Left ventricle myocardium inferior (tissue), 1 donor: ENCODE measurements at regions of chr9 and their contacts with region 1.

Region 1: DNA sequence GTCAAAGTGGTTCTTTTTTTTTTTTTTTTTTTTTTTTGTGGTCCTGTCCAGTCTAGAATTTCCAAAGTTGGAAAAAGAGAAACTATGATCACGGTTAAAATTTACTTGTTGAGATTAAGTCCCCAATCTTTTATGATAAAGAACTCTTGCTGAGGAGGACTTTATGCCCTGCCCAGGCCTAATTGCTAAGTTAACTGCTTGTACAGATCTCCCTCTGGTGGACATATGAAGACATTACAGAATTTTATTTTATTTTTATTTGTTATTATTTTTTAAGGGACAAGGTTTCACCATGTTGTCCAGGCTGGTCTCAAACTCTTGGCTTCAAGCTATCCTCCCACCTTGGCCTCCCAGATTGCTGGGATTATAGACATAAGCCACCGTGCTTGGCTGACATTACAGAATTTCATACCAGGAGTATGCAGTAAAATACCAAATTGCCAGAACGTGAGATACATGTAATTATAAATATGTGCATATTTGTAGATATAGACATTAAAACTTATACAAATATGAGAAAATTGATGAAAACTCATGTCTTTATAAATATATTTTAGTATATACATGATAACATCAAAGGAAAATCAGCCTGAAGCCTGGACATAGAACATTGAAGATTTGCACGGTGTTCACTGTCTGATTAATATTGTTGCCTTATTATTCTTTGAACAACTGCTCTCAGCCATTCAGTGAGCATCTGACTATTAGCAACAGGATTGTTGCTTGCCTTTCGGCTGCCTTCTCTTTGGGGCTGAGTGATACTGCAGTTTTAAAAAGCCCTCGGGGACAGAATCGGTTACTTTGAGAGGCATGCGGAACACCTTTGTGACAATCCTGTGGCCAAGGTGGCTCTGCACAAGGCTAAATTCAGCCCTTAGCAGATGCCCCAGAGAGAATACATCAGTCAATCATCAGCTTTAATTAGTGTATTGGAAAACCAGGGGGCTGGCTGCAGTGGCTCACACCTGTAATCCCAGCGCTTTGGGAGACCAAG is 91.0 kb downstream of the RFK start:
- DNase-seq: no peak
- H3K4me3 ChIP-seq: no peak overlapping the region
- H3K27ac ChIP-seq: no peak overlapping the region
- H3K4me1 ChIP-seq: no peaks in the 10 kb centered on the region
- H3K27me3 ChIP-seq: peaks cover 21% of the 10 kb centered on the region
- CTCF ChIP-seq: peak; percentile 78

Region 2: GRCh38 chr9:75197561-75197960 is 1105.7 kb before region 1 on chr9:
- intact Hi-C with region 1: loop called (anchors 10 kb)
- DNase-seq: no peak
- H3K4me3 ChIP-seq: no peak overlapping the region
- H3K27ac ChIP-seq: no peak overlapping the region
- H3K4me1 ChIP-seq: no peaks in the 10 kb centered on the region
- H3K27me3 ChIP-seq: no peaks in the 10 kb centered on the region
- CTCF ChIP-seq: no peak

Region 3: GRCh38 chr9:75265525-75265972 is 1037.7 kb before region 1 on chr9:
- intact Hi-C with region 1: loop called (anchors 10 kb)
- DNase-seq: no peak
- H3K4me3 ChIP-seq: no peak overlapping the region
- H3K27ac ChIP-seq: no peak overlapping the region
- H3K4me1 ChIP-seq: no peaks in the 10 kb centered on the region
- H3K27me3 ChIP-seq: no peaks in the 10 kb centered on the region
- CTCF ChIP-seq: peak; percentile 94

Region 4: GRCh38 chr9:75890472-75891276 is 412.6 kb before region 1 on chr9 and contains the start of gene PCSK5:
- intact Hi-C with region 1: loop called (anchors 10 kb)
- DNase-seq: peak; percentile 88
- H3K4me3 ChIP-seq: peak within 1 kb of the TSS; percentile 85
- H3K27ac ChIP-seq: peak within 1 kb of the TSS; percentile 87
- H3K4me1 ChIP-seq: peaks cover 48% of the 10 kb centered on the region
- H3K27me3 ChIP-seq: no peaks in the 10 kb centered on the region
- CTCF ChIP-seq: peak; percentile 50
- total RNA-seq, gene PCSK5: 5.6 TPM

Region 5: DNA sequence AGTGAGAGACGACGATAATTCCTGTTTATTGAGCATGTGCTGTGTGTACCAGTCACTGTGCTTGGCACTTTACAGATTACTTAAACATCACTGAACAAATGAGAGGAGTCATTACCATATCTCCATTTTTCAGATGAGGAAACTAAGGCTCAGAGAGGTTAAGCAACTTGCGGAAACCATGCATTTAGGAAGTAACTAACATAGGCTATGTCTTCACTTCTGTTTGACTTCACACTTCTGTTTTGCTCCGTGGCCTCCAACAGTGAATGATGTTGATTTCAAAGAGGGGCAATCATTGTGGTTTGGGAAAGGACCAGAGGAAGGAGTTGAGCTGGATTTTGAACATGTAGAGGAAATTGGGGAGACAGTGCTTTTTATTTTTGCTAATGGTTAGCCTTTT is 172.4 kb after region 1 on chr9:
- intact Hi-C with region 1: no loop called
- DNase-seq: no peak
- H3K4me3 ChIP-seq: no peak overlapping the region
- H3K27ac ChIP-seq: no peak overlapping the region
- H3K4me1 ChIP-seq: no peaks in the 10 kb centered on the region
- H3K27me3 ChIP-seq: no peaks in the 10 kb centered on the region
- CTCF ChIP-seq: no peak